PC-3 (cell line): ENCODE measurements at regions of chr19 and their contacts with region 1.

Region 1: GRCh38 chr19:49528211-49528771 is 488 bp downstream of the RCN3 start:
- DNase-seq: no peak
- ATAC-seq: no peak
- H3K4me3 ChIP-seq: peak overlapping the region; percentile 48
- H3K27ac ChIP-seq: no peak overlapping the region
- H3K4me1 ChIP-seq: peaks cover 8% of the 10 kb centered on the region; the same call in 1 of the 2 replicates
- H3K27me3 ChIP-seq: no peaks in the 10 kb centered on the region
- CTCF ChIP-seq: no peak

Region 2: GRCh38 chr19:49553451-49554271 is 25.4 kb after region 1 on chr19:
- CTCF ChIA-PET with region 1: interaction called, 4 read pairs
- POLR2A ChIA-PET with region 1: no interaction called
- intact Hi-C with region 1: loop called (anchors 1 kb)
- DNase-seq: peak; percentile 90
- ATAC-seq: peak; percentile 98
- H3K4me3 ChIP-seq: no peak overlapping the region
- H3K27ac ChIP-seq: peak overlapping the region; percentile 55
- H3K4me1 ChIP-seq: peaks cover 15% of the 10 kb centered on the region
- H3K27me3 ChIP-seq: no peaks in the 10 kb centered on the region
- CTCF ChIP-seq: no peak

Region 3: DNA sequence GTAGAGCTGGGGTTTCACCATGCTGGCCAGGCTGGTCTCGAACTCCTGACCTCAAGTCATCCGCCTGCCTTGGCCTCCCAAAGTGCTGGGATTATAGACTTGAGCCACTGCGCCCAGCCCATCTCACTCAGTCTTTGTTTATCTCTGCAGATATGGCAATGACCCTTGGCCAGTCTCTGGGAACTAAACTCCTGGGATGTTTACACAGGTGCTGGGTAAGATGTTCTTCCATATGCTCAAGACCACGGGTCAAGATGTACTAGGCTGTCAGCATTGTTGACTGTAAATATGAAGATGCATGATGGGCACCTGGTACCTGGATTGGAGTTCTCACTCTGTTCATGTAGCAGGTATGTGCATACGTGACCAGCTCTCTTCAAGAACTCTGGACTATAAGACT is 533.4 kb after region 1 on chr19:
- CTCF ChIA-PET with region 1: no interaction called
- POLR2A ChIA-PET with region 1: no interaction called
- intact Hi-C with region 1: no loop called
- DNase-seq: no peak
- ATAC-seq: no peak
- H3K4me3 ChIP-seq: no peak overlapping the region
- H3K27ac ChIP-seq: no peak overlapping the region
- H3K4me1 ChIP-seq: no peaks in the 10 kb centered on the region
- H3K27me3 ChIP-seq: no peaks in the 10 kb centered on the region
- CTCF ChIP-seq: no peak